ENCODE measurements at regions of chr9 and their contacts with region 1.

Region 1: DNA sequence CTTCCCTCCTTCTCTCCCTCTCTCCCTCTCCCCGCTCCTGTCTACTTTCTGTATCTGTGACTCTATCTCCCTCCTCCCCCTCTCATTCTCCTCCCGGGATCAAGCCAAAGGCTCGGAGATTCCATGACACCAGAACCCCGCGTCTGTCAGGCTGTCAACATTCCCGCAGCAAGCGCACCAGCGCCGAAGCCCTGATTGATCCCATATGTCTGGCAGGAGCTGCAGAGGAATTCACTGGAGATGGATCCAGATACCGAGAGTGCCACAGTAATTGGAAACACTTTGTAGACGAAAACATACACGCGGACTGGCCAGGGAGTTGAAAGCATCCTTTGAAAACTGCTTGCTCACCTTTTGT is 300 bp upstream of the SVEP1 start:
- DNase-seq: no peak
- ATAC-seq: no peak
- H3K4me3 ChIP-seq: no peak overlapping the region
- H3K27ac ChIP-seq: no peak overlapping the region
- H3K4me1 ChIP-seq: peaks cover 10% of the 10 kb centered on the region; the same call in 1 of the 2 replicates
- H3K27me3 ChIP-seq: no peaks in the 10 kb centered on the region
- CTCF ChIP-seq: no peak

Region 2: DNA sequence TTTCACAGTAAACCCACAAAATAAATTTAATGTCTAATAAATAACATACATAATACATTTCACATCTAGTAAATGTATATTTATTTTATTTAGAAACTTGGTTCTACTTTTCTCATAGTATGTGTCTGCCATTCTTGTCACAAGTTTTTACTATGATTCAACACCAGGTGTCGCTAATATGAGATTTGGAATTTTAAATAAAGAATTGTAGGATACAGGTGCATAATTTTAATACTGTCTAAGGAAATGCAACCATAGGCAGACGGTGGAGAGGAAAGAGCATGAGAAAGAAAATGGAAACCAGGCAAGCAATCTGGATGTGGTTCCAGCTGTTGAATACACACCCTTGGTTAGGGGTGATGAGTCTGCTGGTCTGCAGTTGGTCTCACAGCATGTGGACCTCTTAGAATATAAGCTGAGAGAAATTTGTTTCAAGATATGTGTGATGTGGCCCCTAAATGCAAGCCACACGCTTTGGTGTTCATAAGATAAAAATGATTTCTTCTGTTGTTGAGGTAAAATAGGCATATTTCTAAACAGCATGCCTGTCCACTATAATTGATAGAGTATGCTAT is 127.5 kb before region 1 on chr9:
- CTCF ChIA-PET with region 1: no interaction called
- POLR2A ChIA-PET with region 1: no interaction called
- intact Hi-C with region 1: loop called (anchors 1 kb)
- DNase-seq: peak; percentile 50
- ATAC-seq: peak; percentile 54
- H3K4me3 ChIP-seq: no peak overlapping the region
- H3K27ac ChIP-seq: no peak overlapping the region
- H3K4me1 ChIP-seq: no peaks in the 10 kb centered on the region
- H3K27me3 ChIP-seq: no peaks in the 10 kb centered on the region
- CTCF ChIP-seq: peak; percentile 59

Region 3: GRCh38 chr9:110476251-110476650 is 103.6 kb before region 1 on chr9:
- CTCF ChIA-PET with region 1: no interaction called
- POLR2A ChIA-PET with region 1: no interaction called
- intact Hi-C with region 1: no loop called
- DNase-seq: no peak
- ATAC-seq: no peak
- H3K4me3 ChIP-seq: no peak overlapping the region
- H3K27ac ChIP-seq: no peak overlapping the region
- H3K4me1 ChIP-seq: no peaks in the 10 kb centered on the region
- H3K27me3 ChIP-seq: no peaks in the 10 kb centered on the region
- CTCF ChIP-seq: no peak